ENCODE measurements at regions of chr13 and their contacts with region 1.

Region 1: GRCh38 chr13:110915057-110915873 is at the start of gene ANKRD10:
- DNase-seq: peak; percentile 97
- H3K4me3 Mint-ChIP-seq: peak within 1 kb of the TSS; percentile 92
- H3K27ac Mint-ChIP-seq: peak within 1 kb of the TSS; percentile 97
- H3K4me1 Mint-ChIP-seq: peaks cover 42% of the 10 kb centered on the region
- H3K27me3 Mint-ChIP-seq: no peaks in the 10 kb centered on the region

Region 2: GRCh38 chr13:110904748-110905147 is 10.5 kb before region 1 on chr13:
- CTCF ChIA-PET with region 1: interaction called, 10 read pairs
- DNase-seq: no peak
- H3K4me3 Mint-ChIP-seq: no peak overlapping the region
- H3K27ac Mint-ChIP-seq: no peak overlapping the region
- H3K4me1 Mint-ChIP-seq: peaks cover 31% of the 10 kb centered on the region
- H3K27me3 Mint-ChIP-seq: no peaks in the 10 kb centered on the region